ENCODE measurements at regions of chr1 and their contacts with region 1.

Region 1: GRCh38 chr1:3529099-3529729 is 74.7 kb downstream of the ARHGEF16 start:
- DNase-seq: peak; percentile 76 to 89 (median 81)
- ATAC-seq: peak; percentile 77 to 88 (median 85)
- H3K4me3 ChIP-seq: peak overlapping the region in 2 of 12 donors; percentile 69 to 85
- H3K27ac ChIP-seq: peak overlapping the region in 11 of 12 donors; percentile 60 to 87 (median 73)
- H3K4me1 ChIP-seq: peaks cover 5 to 42% (median 20%) of the 10 kb centered on the region in 12 donors
- H3K27me3 ChIP-seq: no peaks in the 10 kb centered on the region
- CTCF ChIP-seq: no peak
- POLR2A ChIP-seq: no peak

Region 2: DNA sequence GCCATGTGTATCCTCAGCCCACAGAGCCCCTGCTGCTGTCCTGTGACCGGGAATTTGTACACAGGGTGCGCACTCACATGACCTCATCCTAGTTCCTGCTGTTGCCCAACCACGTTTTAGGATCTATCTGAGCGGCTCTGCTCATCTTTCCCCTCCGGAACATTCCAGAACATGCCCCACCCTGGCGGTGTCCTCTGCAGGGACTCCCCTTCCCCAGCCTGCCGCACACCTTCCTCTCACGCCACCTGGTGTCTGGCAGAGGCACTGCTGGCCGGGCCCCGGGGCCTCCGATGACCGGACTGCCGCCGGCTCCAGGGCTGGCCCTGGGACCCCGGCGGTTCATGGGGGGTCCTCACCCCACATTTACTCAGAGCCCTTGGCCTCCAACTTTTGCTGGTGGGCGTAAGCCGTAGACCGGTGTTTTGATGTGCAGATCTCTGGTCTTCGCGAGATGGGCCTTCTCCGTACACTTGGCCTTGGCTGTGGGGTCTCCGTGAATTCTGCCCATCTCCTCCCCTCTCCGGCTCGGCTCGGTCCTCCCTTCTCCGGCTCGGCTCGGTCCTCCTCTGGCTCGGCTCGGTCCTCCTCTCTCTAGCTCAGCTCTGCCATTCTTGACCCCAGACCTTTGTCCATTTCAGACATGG is 45.3 kb before region 1 on chr1:
- intact Hi-C with region 1: loop called in 1 of 10 experiments (anchors 5 kb)
- DNase-seq: no peak
- ATAC-seq: peak in 3 of 4 donors; percentile 53 to 67 (median 56)
- H3K4me3 ChIP-seq: no peak overlapping the region
- H3K27ac ChIP-seq: no peak overlapping the region
- H3K4me1 ChIP-seq: peaks cover 0 to 3% (median 0%) of the 10 kb centered on the region in 12 donors
- H3K27me3 ChIP-seq: peaks cover 0 to 4% (median 0%) of the 10 kb centered on the region in 9 donors
- CTCF ChIP-seq: peak; percentile 74 to 92 (median 84)
- POLR2A ChIP-seq: no peak

Region 3: DNA sequence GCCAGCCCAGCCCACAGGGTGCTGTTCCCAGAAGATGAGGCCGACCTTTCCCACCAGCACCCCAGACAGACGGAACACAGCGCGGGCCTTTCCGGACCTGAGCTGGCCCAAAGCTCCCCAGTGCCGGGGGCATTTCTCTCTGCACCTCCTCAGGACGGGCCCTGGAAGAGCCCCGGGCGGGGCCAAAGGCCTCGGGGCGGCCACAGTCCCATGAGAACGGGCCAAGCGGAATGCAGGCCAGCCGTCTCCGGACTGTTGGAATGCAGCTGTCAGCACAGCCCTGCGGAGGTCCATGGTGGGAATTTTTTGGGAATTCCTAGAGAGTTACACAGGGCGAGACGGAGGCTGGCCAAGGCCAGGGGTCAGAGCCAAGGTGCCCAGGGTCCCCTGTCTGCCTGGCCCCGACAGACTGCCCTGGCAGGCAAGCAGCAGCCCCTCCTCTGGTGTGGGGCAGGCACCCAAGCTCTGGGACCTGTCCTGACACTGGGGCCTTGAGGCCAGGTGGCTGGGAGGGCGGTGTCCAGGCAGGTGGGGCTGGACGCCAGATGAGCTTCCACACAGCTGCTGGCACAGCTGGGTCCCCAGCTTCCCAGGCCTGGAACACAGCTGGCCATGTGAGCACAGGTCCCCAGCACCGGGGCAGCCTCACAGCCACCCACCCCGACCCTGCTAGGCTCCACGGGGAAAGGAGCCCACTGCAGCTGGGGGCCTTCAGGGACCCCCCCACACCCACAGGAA is 19.1 kb after region 1 on chr1:
- intact Hi-C with region 1: loop called in 1 of 10 experiments (anchors 2 kb)
- DNase-seq: no peak
- ATAC-seq: peak in 3 of 4 donors; percentile 23 to 57 (median 44)
- H3K4me3 ChIP-seq: no peak overlapping the region
- H3K27ac ChIP-seq: no peak overlapping the region
- H3K4me1 ChIP-seq: peaks cover 0 to 27% (median 13%) of the 10 kb centered on the region in 12 donors
- H3K27me3 ChIP-seq: peaks cover 0 to 11% (median 0%) of the 10 kb centered on the region in 9 donors
- CTCF ChIP-seq: no peak
- POLR2A ChIP-seq: no peak

Region 4: DNA sequence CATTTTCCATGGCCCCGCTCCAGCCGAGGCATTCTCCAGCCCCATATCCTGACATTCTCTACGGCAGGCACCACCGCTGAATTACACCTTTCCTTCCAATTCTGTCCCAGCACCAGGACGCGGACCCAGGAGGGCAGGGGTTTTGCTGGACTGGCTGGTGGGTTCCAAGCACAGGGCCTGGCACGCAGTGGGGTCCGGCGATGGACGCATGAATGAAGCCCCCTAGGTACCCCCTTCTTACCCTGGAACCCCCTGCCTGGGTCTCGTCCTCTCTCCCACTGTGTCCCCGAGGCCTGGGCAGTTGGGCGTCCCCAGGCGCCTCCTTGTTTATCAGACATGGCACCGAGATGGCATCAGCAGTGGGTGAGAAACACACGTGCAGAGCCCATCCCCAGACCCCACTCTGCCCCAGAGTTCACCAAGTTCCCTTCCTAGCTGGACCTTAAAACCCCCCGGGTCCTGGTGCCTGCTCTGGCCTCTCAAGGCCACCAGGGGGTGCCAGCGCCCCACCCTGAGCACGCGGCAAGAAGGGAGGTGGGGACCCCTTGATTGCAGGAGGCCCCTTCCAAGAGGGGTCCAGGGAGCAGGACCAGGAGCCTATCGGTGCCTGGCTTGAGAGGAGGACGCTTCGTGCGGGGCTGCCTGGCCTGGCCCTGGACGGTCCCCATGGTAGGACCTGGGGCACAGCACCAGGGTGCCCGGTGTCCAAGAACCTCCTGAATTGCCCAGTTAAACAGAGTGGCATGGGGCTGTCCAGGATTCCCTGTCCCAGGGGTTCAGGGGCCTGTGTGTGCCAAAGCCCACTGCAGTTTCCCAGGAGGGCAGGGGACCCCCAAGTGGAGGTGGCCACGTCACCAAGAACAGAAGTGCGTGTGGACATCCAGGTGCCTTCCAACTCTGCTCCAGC is 36.0 kb after region 1 on chr1:
- intact Hi-C with region 1: no loop called
- DNase-seq: no peak
- ATAC-seq: peak in 3 of 4 donors; percentile 21 to 56 (median 47)
- H3K4me3 ChIP-seq: no peak overlapping the region
- H3K27ac ChIP-seq: no peak overlapping the region
- H3K4me1 ChIP-seq: peaks cover 0 to 2% (median 0%) of the 10 kb centered on the region in 12 donors
- H3K27me3 ChIP-seq: peaks cover 0 to 13% (median 0%) of the 10 kb centered on the region in 9 donors
- CTCF ChIP-seq: peak; percentile 74 to 94 (median 86)
- POLR2A ChIP-seq: no peak

Region 5: DNA sequence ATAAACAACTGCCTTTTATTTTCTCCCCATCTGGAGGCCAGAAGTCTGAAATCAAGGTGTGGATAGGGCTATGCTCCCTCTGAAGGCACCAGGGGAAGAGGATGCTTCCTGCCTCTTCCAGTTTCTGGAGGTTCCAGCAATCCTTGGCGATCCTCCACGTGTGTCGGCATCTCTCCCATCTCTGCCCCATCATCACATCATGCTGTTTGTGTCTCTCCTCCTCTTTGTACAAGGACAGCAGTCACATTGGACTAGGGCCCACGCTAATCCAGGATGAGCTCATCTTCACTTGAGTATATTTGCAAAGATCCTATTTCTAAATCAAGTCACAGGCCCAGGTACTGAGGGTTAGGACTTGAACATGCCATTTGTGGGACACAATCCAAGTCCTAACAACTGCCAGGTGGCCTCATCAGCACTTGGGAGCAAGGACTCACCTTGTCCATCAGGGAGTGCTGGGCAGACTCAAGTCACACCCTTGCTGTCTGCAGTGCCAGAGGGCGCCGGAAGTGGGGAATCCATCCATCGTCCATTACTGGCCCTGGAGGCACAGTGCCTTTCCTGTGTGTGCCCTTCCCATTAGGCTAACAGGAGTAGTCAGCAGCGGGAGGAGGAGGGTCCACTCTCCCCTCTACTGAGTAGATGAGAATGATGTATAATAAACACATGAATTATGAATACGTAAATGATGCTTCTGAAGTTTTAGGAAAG is 939.7 kb after region 1 on chr1:
- intact Hi-C with region 1: no loop called
- DNase-seq: no peak
- ATAC-seq: no peak
- H3K4me3 ChIP-seq: no peak overlapping the region
- H3K27ac ChIP-seq: no peak overlapping the region
- H3K4me1 ChIP-seq: peaks cover 0 to 1% (median 0%) of the 10 kb centered on the region in 12 donors
- H3K27me3 ChIP-seq: no peaks in the 10 kb centered on the region
- CTCF ChIP-seq: no peak
- POLR2A ChIP-seq: no peak

Measured in heart left ventricle (tissue), 16 donors.